ENCODE measurements at regions of chr1 and their contacts with region 1.

Region 1: DNA sequence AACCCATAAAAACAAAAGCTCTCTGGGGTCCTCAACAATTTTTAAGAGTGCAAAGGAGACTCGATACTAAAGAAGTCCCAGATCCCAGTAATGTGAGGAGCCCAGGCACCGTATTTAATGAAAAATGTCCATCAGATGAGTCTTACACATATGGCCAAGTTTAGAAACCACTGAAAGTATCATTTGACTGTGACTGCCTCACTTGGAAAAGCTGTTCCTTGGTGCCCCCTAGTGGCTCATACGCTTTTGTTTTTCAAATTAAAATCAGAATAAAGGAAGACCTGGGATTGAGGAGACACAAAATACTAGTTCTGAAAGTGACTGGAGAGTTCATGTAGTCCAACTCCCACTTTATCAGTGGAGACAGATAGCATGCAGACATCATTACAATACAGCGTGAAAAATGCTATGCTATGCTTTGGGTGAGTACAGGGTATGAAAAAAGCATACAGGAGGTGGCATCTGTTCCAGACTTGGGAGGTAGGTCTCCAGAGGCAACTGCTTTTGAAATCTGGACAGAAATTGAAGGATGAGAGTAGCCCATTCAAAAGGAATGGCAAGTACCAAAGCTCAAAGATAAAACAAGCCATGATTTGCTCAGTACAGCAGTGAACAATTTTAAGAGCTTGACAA is 33.8 kb downstream of the GDAP2 start:
- DNase-seq: peak in 1 of 2 donors; percentile 59
- ATAC-seq: peak; percentile 84
- H3K4me3 ChIP-seq: no peak overlapping the region
- H3K27ac ChIP-seq: no peak overlapping the region
- H3K4me1 ChIP-seq: no peaks in the 10 kb centered on the region
- H3K27me3 ChIP-seq: no peaks in the 10 kb centered on the region

Region 2: GRCh38 chr1:117512743-117513321 is 382.8 kb before region 1 on chr1:
- intact Hi-C with region 1: loop called (anchors 5 kb)
- DNase-seq: no peak
- ATAC-seq: no peak
- H3K4me3 ChIP-seq: no peak overlapping the region
- H3K27ac ChIP-seq: no peak overlapping the region
- H3K4me1 ChIP-seq: no peaks in the 10 kb centered on the region
- H3K27me3 ChIP-seq: no peaks in the 10 kb centered on the region

Region 3: DNA sequence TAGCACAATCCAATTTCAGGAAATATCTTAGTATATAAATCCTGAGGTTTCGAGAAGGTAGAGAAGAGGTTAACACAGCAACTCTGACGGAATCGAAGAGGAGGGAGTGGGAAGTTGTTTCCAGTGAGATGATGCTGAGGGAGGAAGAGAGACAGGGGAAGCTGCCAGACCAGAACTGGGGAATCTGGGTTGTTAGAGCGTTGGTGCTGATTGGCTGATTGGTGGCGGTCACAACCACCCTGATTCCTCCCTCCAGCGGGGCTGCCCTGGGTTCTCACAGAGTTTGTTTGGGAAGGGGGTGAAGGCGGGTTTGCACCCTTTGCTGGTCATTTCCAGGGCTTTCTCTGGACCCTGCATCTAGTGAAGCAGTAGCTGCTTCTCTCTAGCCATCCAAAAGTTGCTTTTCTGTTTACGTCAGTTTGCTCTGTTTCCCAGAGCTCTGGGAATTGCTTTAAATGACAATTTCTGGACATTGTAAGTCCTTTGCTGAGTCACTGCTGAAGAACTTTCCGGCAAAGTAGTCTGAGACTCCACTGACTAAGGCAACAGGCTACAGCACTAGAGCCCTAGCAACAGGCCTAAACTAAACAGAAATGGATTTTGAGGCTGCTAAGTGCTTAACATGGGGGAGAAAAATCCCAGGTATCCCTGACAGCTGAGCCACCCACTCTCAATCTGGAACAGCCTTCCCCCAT is 199.7 kb before region 1 on chr1:
- intact Hi-C with region 1: no loop called
- DNase-seq: peak in 1 of 2 donors; percentile 74
- ATAC-seq: peak; percentile 92
- H3K4me3 ChIP-seq: peak overlapping the region in 1 of 2 donors; percentile 37
- H3K27ac ChIP-seq: peak overlapping the region; percentile 99 to 100
- H3K4me1 ChIP-seq: peaks cover 0 to 14% of the 10 kb centered on the region in 2 donors
- H3K27me3 ChIP-seq: no peaks in the 10 kb centered on the region

Region 4: GRCh38 chr1:117780687-117781475 is 114.7 kb before region 1 on chr1:
- intact Hi-C with region 1: no loop called
- DNase-seq: no peak
- ATAC-seq: no peak
- H3K4me3 ChIP-seq: no peak overlapping the region
- H3K27ac ChIP-seq: no peak overlapping the region
- H3K4me1 ChIP-seq: no peaks in the 10 kb centered on the region
- H3K27me3 ChIP-seq: no peaks in the 10 kb centered on the region